Activated CD8-positive, alpha-beta memory T cell treated with anti-CD3 and anti-CD28 coated beads, Interleukin-2, amount 10 ng/mL, durations not matched to agents 7 days and 5 days (primary cell): ENCODE measurements at regions of chr1 and their contacts with region 1.

Region 1: DNA sequence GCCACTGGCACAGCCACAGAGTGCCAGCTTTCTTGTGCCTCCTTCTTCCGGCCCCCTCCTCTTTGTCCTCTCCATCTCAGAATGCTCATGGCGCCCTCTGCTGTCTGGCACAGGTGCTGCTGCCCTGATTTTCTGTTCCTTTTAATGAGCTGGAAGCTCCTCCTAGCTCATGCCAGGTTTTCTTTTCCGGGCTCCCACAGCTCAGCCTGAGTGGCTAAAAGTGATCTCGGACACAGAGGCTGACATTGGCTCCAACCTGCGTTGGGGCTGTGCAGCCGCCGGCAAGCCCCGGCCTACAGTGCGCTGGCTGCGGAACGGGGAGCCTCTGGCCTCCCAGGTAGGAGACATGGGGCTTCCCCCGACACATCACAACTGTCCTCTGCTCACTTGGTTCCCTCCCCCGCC is 18.7 kb downstream of the CNTN2 start:
- DNase-seq: peak; percentile 81
- ATAC-seq: peak; percentile 61
- H3K4me3 Mint-ChIP-seq: no peak overlapping the region
- H3K27ac Mint-ChIP-seq: no peak overlapping the region
- H3K4me1 Mint-ChIP-seq: no peaks in the 10 kb centered on the region
- H3K27me3 Mint-ChIP-seq: no peaks in the 10 kb centered on the region

Region 2: GRCh38 chr1:204989266-204990058 is 72.2 kb before region 1 on chr1:
- CTCF ChIA-PET with region 1: interaction called, 103 read pairs
- DNase-seq: peak; percentile 70
- ATAC-seq: peak; percentile 72
- H3K4me3 Mint-ChIP-seq: no peak overlapping the region
- H3K27ac Mint-ChIP-seq: no peak overlapping the region
- H3K4me1 Mint-ChIP-seq: peaks cover 12% of the 10 kb centered on the region
- H3K27me3 Mint-ChIP-seq: peaks cover 11% of the 10 kb centered on the region

Region 3: GRCh38 chr1:205037539-205037938 is 24.1 kb before region 1 on chr1:
- CTCF ChIA-PET with region 1: no interaction called
- DNase-seq: no peak
- ATAC-seq: no peak
- H3K4me3 Mint-ChIP-seq: no peak overlapping the region
- H3K27ac Mint-ChIP-seq: no peak overlapping the region
- H3K4me1 Mint-ChIP-seq: no peaks in the 10 kb centered on the region
- H3K27me3 Mint-ChIP-seq: peaks cover 30% of the 10 kb centered on the region

Region 4: DNA sequence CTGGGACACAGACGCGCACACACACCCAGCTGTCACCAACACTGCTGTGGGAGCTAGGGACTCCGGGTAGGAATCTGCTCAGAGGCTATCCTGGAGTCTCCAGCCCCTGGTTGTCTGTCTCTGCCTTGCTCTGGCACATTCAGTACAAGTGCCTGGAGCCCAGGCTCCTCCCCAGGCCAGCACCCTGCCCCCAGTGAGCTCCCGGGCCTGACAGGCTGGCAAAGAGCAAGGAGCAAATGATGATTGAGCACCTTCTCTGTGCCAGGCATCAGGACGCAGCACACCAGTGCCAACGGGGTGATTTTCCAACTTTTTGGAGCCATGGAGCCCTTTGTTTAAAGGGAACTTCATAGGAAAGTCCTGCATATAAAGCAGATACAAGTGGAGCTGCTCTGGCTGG is 12.2 kb before region 1 on chr1:
- CTCF ChIA-PET with region 1: interaction called, 13 read pairs
- DNase-seq: no peak
- ATAC-seq: no peak
- H3K4me3 Mint-ChIP-seq: no peak overlapping the region
- H3K27ac Mint-ChIP-seq: no peak overlapping the region
- H3K4me1 Mint-ChIP-seq: no peaks in the 10 kb centered on the region
- H3K27me3 Mint-ChIP-seq: peaks cover 22% of the 10 kb centered on the region

Region 5: DNA sequence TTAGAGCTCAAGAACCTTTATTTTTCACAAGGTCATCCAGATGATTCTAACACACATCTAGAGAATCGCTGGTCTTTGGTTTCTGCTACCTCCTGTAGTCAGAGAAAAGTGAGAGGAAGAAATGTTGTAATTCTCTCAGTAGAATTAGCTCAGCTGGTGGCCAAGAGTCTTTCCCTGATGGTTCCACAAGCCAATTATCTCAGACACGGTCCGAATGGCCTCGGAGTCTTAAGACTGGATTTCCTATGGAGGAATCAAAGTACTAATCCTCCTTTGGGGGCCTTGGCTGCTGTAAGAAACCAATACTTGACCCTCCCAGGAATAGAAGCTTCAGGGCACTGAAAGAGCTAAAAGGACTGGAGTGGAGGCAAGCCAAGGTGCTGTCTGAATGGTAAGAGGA is 20.8 kb after region 1 on chr1:
- CTCF ChIA-PET with region 1: interaction called, 28 read pairs
- DNase-seq: no peak
- ATAC-seq: no peak
- H3K4me3 Mint-ChIP-seq: no peak overlapping the region
- H3K27ac Mint-ChIP-seq: no peak overlapping the region
- H3K4me1 Mint-ChIP-seq: no peaks in the 10 kb centered on the region
- H3K27me3 Mint-ChIP-seq: no peaks in the 10 kb centered on the region

Region 6: GRCh38 chr1:205477759-205478247 is 416.1 kb after region 1 on chr1:
- CTCF ChIA-PET with region 1: no interaction called
- DNase-seq: no peak
- ATAC-seq: no peak
- H3K4me3 Mint-ChIP-seq: no peak overlapping the region
- H3K27ac Mint-ChIP-seq: no peak overlapping the region
- H3K4me1 Mint-ChIP-seq: peaks cover 26% of the 10 kb centered on the region
- H3K27me3 Mint-ChIP-seq: peaks cover 18% of the 10 kb centered on the region